K562 (cell line): ENCODE measurements at regions of chr11 and their contacts with region 1.

Region 1: GRCh38 chr11:17960091-17960490 is 52.8 kb downstream of the SERGEF start:
- DNase-seq: no peak
- ATAC-seq: no peak
- H3K4me3 ChIP-seq: no peak overlapping the region
- H3K27ac ChIP-seq: no peak overlapping the region
- H3K4me1 ChIP-seq: no peaks in the 10 kb centered on the region
- H3K27me3 ChIP-seq: no peaks in the 10 kb centered on the region
- CTCF ChIP-seq: no peak
- EP300 ChIP-seq: no peak
- POLR2A ChIP-seq: no peak
- RAD21 ChIP-seq: no peak

Region 2: DNA sequence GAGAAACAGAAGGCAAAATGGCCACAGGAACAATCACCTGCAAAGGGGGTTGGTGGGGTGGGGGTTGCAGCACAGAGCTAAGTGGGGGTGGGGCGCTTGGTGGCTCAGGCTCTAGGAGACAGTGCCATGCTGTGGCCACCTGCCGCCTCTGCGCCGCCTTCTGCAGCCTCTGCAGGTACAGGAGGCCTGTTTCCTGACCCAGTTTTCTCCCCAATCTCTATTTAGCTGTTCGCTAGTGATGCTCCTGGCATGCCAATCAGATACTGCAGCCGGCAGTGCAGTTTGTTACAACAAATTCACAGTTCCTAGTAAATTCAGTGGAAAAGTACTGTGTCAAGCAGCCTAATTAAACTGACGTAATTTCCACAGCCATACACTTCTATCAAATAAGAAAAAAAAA is 53.7 kb before region 1 on chr11:
- CTCF ChIA-PET with region 1: no interaction called
- POLR2A ChIA-PET with region 1: interaction called, 4 read pairs
- in situ Hi-C with region 1: no loop called
- intact Hi-C with region 1: loop called (anchors 10 kb)
- DNase-seq: peak; percentile 16 to 40 (median 25)
- ATAC-seq: peak; percentile 87
- H3K4me3 ChIP-seq: no peak overlapping the region
- H3K27ac ChIP-seq: no peak overlapping the region
- H3K4me1 ChIP-seq: no peaks in the 10 kb centered on the region
- H3K27me3 ChIP-seq: no peaks in the 10 kb centered on the region
- CTCF ChIP-seq: peak; percentile 22 to 46 (median 45); a peak in 3 of 6 replicates
- EP300 ChIP-seq: no peak
- POLR2A ChIP-seq: no peak
- RAD21 ChIP-seq: peak in 1 of 2 experiments; percentile 45; a peak in 2 of 4 replicates

Region 3: GRCh38 chr11:18027475-18027874 is 67.4 kb after region 1 on chr11:
- CTCF ChIA-PET with region 1: no interaction called
- POLR2A ChIA-PET with region 1: no interaction called
- in situ Hi-C with region 1: no loop called
- intact Hi-C with region 1: no loop called
- DNase-seq: no peak
- ATAC-seq: no peak
- H3K4me3 ChIP-seq: no peak overlapping the region
- H3K27ac ChIP-seq: no peak overlapping the region
- H3K4me1 ChIP-seq: no peaks in the 10 kb centered on the region
- H3K27me3 ChIP-seq: no peaks in the 10 kb centered on the region; a peak in 2 of 5 replicates
- CTCF ChIP-seq: no peak
- EP300 ChIP-seq: no peak
- POLR2A ChIP-seq: no peak
- RAD21 ChIP-seq: no peak

Region 4: DNA sequence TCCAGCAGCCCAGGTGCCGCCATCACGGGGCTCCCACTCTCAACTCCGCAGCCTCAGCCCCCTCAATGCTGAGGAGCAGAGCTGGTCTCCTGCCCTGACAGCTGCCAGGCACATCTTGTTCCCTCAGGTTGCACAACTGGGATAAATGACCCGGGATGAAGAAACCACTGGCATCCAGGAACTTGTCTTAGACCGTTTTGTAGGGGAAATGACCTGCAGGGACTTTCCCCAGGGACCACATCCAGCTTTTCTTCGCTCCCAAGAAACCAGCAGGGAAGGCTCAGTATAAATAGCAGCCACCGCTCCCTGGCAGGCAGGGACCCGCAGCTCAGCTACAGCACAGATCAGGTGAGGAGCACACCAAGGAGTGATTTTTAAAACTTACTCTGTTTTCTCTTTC is 305.9 kb after region 1 on chr11 and contains the start of gene SAA1:
- CTCF ChIA-PET with region 1: no interaction called
- POLR2A ChIA-PET with region 1: no interaction called
- in situ Hi-C with region 1: no loop called
- intact Hi-C with region 1: no loop called
- DNase-seq: no peak
- ATAC-seq: no peak
- H3K4me3 ChIP-seq: no peak within 1 kb of the TSS
- H3K27ac ChIP-seq: no peak within 1 kb of the TSS
- H3K4me1 ChIP-seq: no peaks in the 10 kb centered on the region
- H3K27me3 ChIP-seq: peaks cover 17 to 43% of the 10 kb centered on the region in 2 experiments; a peak in 4 of 5 replicates
- CTCF ChIP-seq: no peak
- EP300 ChIP-seq: no peak
- POLR2A ChIP-seq: no peak
- RAD21 ChIP-seq: no peak
- polyA plus RNA-seq, gene SAA1: not detected